GM10248 (cell line): ENCODE measurements at regions of chr1 and their contacts with region 1.

Region 1: GRCh38 chr1:43763497-43763973 is 56.2 kb downstream of the ST3GAL3 start:
- DNase-seq: peak; percentile 61
- CTCF ChIP-seq: peak; percentile 86

Region 2: GRCh38 chr1:43634721-43635120 is 128.8 kb before region 1 on chr1:
- CTCF ChIA-PET with region 1: no interaction called
- POLR2A ChIA-PET with region 1: no interaction called
- DNase-seq: no peak
- CTCF ChIP-seq: no peak

Region 3: GRCh38 chr1:43736819-43737218 is 26.7 kb before region 1 on chr1:
- CTCF ChIA-PET with region 1: interaction called, 11 read pairs
- POLR2A ChIA-PET with region 1: no interaction called
- DNase-seq: no peak
- CTCF ChIP-seq: no peak

Region 4: GRCh38 chr1:43774359-43774758 is 10.8 kb after region 1 on chr1:
- CTCF ChIA-PET with region 1: interaction called, 17 read pairs
- POLR2A ChIA-PET with region 1: no interaction called
- DNase-seq: no peak
- CTCF ChIP-seq: no peak

Region 5: DNA sequence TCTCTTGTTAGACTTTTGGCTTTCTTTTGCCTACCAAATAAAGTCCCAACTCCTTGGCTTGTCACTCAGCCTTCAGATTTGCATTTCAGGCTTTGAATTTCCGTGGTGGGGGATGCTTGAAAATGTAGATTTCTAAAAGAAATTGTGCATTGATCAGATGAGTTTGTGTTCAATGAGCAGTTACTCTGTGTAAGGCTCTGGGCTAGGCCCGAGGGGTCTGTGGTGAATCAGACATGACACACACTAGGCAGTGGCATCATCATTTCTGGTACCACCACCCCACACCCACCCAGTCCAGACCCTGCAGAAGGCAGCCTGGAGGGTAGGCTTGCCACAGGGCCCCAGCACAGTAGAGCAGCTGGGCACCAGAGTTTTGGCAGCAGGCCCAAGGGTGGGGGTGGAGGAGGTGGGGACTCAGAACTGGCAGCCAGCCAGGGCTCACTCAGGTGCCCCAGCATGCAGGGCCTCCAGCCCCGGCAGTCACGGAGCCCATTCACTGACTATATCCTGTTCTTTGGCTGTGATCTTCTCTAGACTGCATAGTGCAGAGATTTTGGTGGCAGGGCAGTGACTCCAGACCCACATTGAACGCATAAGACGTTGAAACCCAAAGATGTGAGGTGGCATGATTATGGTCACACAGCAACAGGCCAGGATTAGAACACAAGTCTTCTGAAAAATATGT is 72.9 kb after region 1 on chr1:
- CTCF ChIA-PET with region 1: interaction called, 10 read pairs
- POLR2A ChIA-PET with region 1: interaction called, 5 read pairs
- DNase-seq: peak; percentile 46
- CTCF ChIP-seq: no peak

Region 6: GRCh38 chr1:43924516-43924915 is 161.0 kb after region 1 on chr1:
- CTCF ChIA-PET with region 1: interaction called, 36 read pairs
- POLR2A ChIA-PET with region 1: no interaction called
- DNase-seq: no peak
- CTCF ChIP-seq: no peak

Region 7: GRCh38 chr1:44002606-44003157 is 239.1 kb after region 1 on chr1:
- CTCF ChIA-PET with region 1: interaction called, 14 read pairs
- POLR2A ChIA-PET with region 1: no interaction called
- DNase-seq: no peak
- CTCF ChIP-seq: no peak